IMR-90 (cell line): ENCODE measurements at regions of chr12 and their contacts with region 1.

Region 1: GRCh38 chr12:29499235-29499634 is 1.7 kb upstream of the OVCH1 start:
- DNase-seq: no peak
- ATAC-seq: no peak
- H3K4me3 ChIP-seq: no peak overlapping the region
- H3K27ac ChIP-seq: no peak overlapping the region
- H3K4me1 ChIP-seq: no peaks in the 10 kb centered on the region
- H3K27me3 ChIP-seq: no peaks in the 10 kb centered on the region
- CTCF ChIP-seq: no peak
- POLR2A ChIP-seq: no peak
- RAD21 ChIP-seq: no peak

Region 2: GRCh38 chr12:29110506-29111442 is 388.5 kb before region 1 on chr12:
- CTCF ChIA-PET with region 1: no interaction called
- POLR2A ChIA-PET with region 1: no interaction called
- dilution Hi-C with region 1: no loop called
- in situ Hi-C with region 1: no loop called
- intact Hi-C with region 1: no loop called
- DNase-seq: no peak
- ATAC-seq: no peak
- H3K4me3 ChIP-seq: no peak overlapping the region
- H3K27ac ChIP-seq: no peak overlapping the region
- H3K4me1 ChIP-seq: no peaks in the 10 kb centered on the region
- H3K27me3 ChIP-seq: no peaks in the 10 kb centered on the region
- CTCF ChIP-seq: no peak
- POLR2A ChIP-seq: no peak
- RAD21 ChIP-seq: no peak

Region 3: DNA sequence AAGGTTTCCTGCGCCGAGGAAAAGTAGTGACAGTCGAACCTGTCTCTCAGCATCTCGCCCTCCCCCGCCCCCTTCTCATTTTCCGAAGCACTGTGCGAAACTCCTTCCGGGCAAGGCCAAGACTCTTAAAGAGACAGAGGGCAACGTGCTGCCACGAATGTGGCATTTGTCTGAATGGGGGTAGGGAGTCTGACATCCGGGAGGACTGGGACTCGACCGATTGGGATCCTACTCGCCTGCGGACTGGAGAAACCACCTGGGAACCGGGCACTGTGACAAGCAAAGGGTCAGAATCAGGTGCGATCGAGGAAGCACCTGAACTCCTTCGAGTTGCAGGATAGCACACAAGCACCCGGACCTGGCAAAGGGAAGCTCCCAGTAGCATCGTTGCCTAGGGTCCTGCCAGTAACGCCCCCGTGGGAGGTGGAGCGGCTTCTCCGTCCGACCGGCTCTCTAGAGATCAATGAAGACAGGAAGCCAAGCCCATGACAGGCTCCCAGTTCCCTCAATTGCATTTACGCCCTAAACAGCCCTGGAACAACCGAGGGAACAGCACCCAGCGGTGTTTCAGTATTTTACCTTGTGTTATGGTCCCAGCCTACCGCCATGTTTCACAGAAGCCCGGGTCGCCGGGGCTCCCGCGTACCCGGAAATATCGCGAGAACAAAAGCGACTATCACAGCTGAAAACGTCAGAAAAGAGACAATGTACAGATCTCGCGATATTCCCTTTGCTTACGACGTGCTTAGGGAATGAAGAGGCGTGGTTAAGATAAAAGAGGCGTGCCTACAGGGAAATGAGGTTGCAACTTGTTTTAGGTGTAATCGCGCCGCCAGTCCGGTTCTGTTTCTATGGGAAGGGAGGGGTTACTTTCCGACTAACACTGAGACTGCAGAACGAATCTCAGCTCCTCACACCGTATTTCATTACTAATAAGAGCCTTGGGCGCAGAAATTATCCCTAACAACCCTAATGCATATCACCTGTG is 118.4 kb before region 1 on chr12 and contains the start of gene ERGIC2:
- CTCF ChIA-PET with region 1: no interaction called
- POLR2A ChIA-PET with region 1: no interaction called
- dilution Hi-C with region 1: no loop called
- in situ Hi-C with region 1: no loop called
- intact Hi-C with region 1: loop called (anchors 5 kb)
- DNase-seq: peak; percentile 99
- ATAC-seq: peak; percentile 98
- H3K4me3 ChIP-seq: peak within 1 kb of the TSS; percentile 82
- H3K27ac ChIP-seq: peak within 1 kb of the TSS; percentile 92
- H3K4me1 ChIP-seq: no peaks in the 10 kb centered on the region
- H3K27me3 ChIP-seq: no peaks in the 10 kb centered on the region
- CTCF ChIP-seq: no peak
- POLR2A ChIP-seq: peak; percentile 69
- RAD21 ChIP-seq: no peak
- total RNA-seq, gene ERGIC2: 45.3 and 107 TPM in 2 replicates

Region 4: GRCh38 chr12:29719381-29719780 is 220.1 kb after region 1 on chr12:
- CTCF ChIA-PET with region 1: no interaction called
- POLR2A ChIA-PET with region 1: no interaction called
- dilution Hi-C with region 1: no loop called
- in situ Hi-C with region 1: no loop called
- intact Hi-C with region 1: no loop called
- DNase-seq: no peak
- ATAC-seq: peak; percentile 33; the same call in 1 of the 2 replicates
- H3K4me3 ChIP-seq: no peak overlapping the region
- H3K27ac ChIP-seq: no peak overlapping the region
- H3K4me1 ChIP-seq: no peaks in the 10 kb centered on the region; the same call in 1 of the 2 replicates
- H3K27me3 ChIP-seq: no peaks in the 10 kb centered on the region
- CTCF ChIP-seq: no peak
- POLR2A ChIP-seq: no peak
- RAD21 ChIP-seq: no peak